Activated CD4-positive, alpha-beta memory T cell treated with anti-CD3 and anti-CD28 coated beads for 36 hours (primary cell): ENCODE measurements at regions of chr11 and their contacts with region 1.

Region 1: DNA sequence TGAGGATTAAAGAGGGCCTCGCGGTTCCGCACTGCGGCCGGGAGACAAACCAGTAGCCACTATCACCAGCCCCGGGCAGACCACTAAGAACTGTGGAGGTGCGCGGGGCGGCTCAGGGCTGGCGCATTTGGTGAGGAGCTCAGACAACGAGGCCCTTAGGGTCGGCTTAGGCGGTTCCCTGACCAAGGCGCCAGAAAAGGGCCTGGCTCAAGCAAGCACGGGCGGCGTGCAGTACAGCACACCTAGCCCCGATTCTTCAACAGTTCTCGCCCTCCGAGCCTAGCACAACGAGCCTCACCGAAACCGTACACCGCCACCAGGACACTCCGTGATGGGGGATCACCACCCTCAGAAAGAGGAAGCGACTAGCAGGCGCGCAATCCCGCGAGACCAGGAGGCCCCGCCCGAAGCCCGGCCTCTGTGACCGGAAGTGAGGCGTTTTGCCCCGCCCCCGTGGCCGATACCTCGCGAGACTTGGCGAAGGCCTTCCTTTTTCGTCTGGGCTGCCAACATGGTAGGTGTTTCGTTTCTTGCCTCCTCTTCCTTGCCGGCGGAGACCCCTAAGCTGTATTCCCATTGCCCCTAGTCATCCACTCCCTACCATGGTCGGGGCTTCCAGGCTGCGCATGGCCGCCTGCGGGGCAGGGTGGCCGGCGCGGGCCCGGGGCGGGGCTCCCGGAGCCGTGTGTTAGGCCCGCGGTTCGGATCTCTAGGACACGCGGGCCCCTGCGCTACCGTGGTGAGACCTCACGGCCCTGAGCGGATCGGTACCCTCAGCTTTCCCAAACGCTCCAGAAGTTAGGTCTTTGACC is at the starts of genes RPL27A and TRIM66:
- DNase-seq: peak; percentile 99
- H3K4me3 Mint-ChIP-seq: peak within 1 kb of the TSS; percentile 94
- H3K27ac Mint-ChIP-seq: peak within 1 kb of the TSS; percentile 88
- H3K4me1 Mint-ChIP-seq: peaks cover 45% of the 10 kb centered on the region
- H3K27me3 Mint-ChIP-seq: no peaks in the 10 kb centered on the region
- total RNA-seq, gene RPL27A: 1,027 to 1,094 TPM
- total RNA-seq, gene TRIM66: 18.3 to 24.2 TPM

Region 2: GRCh38 chr11:7427733-7428132 is 1254.8 kb before region 1 on chr11:
- CTCF ChIA-PET with region 1: no interaction called
- POLR2A ChIA-PET with region 1: no interaction called
- intact Hi-C with region 1: no loop called
- DNase-seq: no peak
- H3K4me3 Mint-ChIP-seq: no peak overlapping the region
- H3K27ac Mint-ChIP-seq: no peak overlapping the region
- H3K4me1 Mint-ChIP-seq: peaks cover 11% of the 10 kb centered on the region
- H3K27me3 Mint-ChIP-seq: no peaks in the 10 kb centered on the region

Region 3: GRCh38 chr11:8604078-8604723 is 78.3 kb before region 1 on chr11:
- CTCF ChIA-PET with region 1: no interaction called
- POLR2A ChIA-PET with region 1: no interaction called
- intact Hi-C with region 1: no loop called
- DNase-seq: peak; percentile 63
- H3K4me3 Mint-ChIP-seq: no peak overlapping the region
- H3K27ac Mint-ChIP-seq: no peak overlapping the region
- H3K4me1 Mint-ChIP-seq: no peaks in the 10 kb centered on the region
- H3K27me3 Mint-ChIP-seq: peaks cover 21% of the 10 kb centered on the region

Region 4: DNA sequence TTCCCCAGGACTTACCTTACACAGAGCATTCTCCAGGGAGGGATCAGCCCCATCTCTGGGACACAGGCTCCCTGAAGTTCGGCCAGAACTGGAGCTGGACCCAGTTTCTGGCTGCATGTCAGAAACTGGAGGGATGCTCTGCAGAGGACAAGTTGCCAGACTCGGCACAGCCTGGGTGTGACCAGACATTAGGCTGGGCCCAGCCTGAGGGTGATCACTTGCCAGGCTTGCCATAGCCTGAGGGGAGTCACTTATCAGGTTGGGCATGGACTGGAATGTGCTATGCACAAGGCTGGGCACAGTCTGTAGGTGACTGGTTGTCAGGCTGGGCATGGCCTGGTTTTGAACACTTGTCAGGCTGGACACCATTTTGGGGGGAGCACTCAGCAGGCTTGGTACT is 57.8 kb before region 1 on chr11:
- CTCF ChIA-PET with region 1: no interaction called
- POLR2A ChIA-PET with region 1: no interaction called
- intact Hi-C with region 1: no loop called
- DNase-seq: no peak
- H3K4me3 Mint-ChIP-seq: no peak overlapping the region
- H3K27ac Mint-ChIP-seq: no peak overlapping the region
- H3K4me1 Mint-ChIP-seq: no peaks in the 10 kb centered on the region
- H3K27me3 Mint-ChIP-seq: no peaks in the 10 kb centered on the region

Region 5: DNA sequence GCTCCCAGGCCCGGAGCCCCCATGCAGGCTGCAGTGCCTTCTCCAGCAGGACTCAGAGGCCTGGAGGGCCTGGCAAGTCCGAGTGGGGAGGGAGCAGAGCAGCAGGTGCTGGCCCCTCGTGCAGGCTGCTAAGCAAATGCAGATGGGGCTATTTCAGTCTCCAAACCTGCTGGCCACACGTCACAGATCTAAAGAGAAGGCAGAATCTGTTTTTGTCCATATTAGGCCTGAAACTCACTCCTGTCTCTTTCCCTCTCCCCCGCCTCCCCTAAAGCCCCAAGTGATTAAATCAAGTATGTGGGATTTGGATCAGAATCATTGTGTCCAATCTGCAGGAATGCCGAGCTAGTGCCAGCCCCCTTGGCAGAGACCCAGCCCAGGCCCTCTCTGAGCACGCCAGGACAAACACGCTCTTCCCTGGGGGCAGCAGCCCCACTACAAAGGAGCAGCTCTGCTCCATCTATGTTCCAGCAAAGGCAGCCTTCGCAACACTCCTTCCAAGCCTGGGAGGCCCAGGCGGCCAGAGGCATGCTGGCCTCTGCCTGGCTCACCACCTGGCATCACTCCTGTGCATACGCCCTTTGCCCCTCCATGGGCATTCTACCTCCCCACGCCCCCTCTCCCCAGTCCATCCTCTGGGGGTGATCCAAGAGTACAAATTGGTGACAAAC is 26.6 kb after region 1 on chr11:
- CTCF ChIA-PET with region 1: no interaction called
- POLR2A ChIA-PET with region 1: no interaction called
- intact Hi-C with region 1: no loop called
- DNase-seq: no peak
- H3K4me3 Mint-ChIP-seq: no peak overlapping the region
- H3K27ac Mint-ChIP-seq: no peak overlapping the region
- H3K4me1 Mint-ChIP-seq: no peaks in the 10 kb centered on the region
- H3K27me3 Mint-ChIP-seq: no peaks in the 10 kb centered on the region

Region 6: DNA sequence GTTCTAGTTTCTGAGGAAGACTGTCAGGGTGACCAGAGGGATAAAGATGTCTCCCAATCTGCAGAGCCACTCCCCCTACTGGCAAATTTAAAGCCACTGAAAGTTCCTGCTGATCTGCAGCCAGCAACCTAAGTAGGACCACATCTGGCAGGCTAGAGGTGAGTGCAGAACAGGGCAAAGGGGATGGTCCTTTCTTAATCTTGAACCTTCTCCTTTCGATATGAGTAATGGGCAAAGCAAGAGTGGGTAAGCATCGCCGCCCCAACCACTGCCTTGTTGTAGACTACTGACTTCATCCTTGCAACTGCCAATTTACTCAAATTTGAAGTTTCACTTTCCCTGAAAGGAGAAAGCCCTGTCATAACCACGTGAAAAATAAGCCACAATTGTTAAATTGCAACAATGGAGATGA is 378.2 kb after region 1 on chr11:
- CTCF ChIA-PET with region 1: no interaction called
- POLR2A ChIA-PET with region 1: no interaction called
- intact Hi-C with region 1: loop called (anchors 2 kb)
- DNase-seq: peak; percentile 88
- H3K4me3 Mint-ChIP-seq: no peak overlapping the region
- H3K27ac Mint-ChIP-seq: no peak overlapping the region
- H3K4me1 Mint-ChIP-seq: peaks cover 12% of the 10 kb centered on the region
- H3K27me3 Mint-ChIP-seq: peaks cover 35% of the 10 kb centered on the region

Region 7: GRCh38 chr11:9363954-9364912 is 681.7 kb after region 1 on chr11:
- CTCF ChIA-PET with region 1: no interaction called
- POLR2A ChIA-PET with region 1: no interaction called
- intact Hi-C with region 1: loop called (anchors 5 kb)
- DNase-seq: peak; percentile 93
- H3K4me3 Mint-ChIP-seq: peak overlapping the region; percentile 74
- H3K27ac Mint-ChIP-seq: peak overlapping the region; percentile 88
- H3K4me1 Mint-ChIP-seq: peaks cover 35% of the 10 kb centered on the region
- H3K27me3 Mint-ChIP-seq: no peaks in the 10 kb centered on the region